PC-9 (cell line): ENCODE measurements at regions of chr17 and their contacts with region 1.

Region 1: GRCh38 chr17:40791787-40792436 is 7.8 kb downstream of the KRT28 start:
- DNase-seq: no peak
- H3K4me3 ChIP-seq: no peak overlapping the region
- H3K27ac ChIP-seq: no peak overlapping the region
- H3K4me1 ChIP-seq: no peaks in the 10 kb centered on the region
- H3K27me3 ChIP-seq: no peaks in the 10 kb centered on the region
- CTCF ChIP-seq: peak; percentile 70

Region 2: DNA sequence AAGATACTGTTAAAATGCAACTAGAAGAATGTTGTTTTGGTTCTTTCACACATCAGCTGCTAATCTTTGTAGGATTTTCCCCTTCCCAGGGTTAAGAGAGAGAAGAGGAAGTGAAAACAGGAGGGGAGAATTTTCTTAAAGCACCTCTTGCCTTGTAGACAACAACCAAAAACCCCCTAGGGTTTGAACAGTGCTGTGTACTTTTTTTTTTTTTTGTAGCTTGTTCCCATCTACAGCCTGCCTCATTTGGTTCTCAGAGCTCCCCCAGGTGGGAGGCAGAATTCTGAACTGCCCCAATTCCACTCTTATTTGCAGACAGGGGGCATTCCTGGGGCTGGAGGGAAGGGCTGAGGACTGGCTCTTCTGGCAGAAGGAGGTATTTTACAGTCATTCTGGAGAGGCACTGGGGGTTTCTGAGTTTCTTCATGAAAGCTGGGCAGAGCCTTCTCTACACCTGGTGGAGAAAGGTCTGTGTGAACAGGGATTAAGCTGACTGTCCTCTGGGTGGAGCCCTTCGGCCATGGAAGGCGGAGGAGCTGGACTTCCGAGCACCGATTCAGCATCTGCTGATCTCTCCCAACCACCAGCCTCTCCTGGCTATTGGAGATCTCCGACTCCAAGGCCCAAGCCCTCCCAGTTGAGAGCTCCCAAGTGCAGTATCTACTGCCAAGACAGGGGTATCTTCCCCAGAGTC is 176.5 kb before region 1 on chr17:
- CTCF ChIA-PET with region 1: interaction called, 14 read pairs
- POLR2A ChIA-PET with region 1: no interaction called
- intact Hi-C with region 1: loop called (anchors 1 kb)
- DNase-seq: peak; percentile 72
- H3K4me3 ChIP-seq: no peak overlapping the region
- H3K27ac ChIP-seq: no peak overlapping the region
- H3K4me1 ChIP-seq: peaks cover 10% of the 10 kb centered on the region
- H3K27me3 ChIP-seq: no peaks in the 10 kb centered on the region
- CTCF ChIP-seq: peak; percentile 73

Region 3: GRCh38 chr17:40637931-40638330 is 154.0 kb before region 1 on chr17:
- CTCF ChIA-PET with region 1: no interaction called
- POLR2A ChIA-PET with region 1: no interaction called
- intact Hi-C with region 1: loop called (anchors 5 kb)
- DNase-seq: no peak
- H3K4me3 ChIP-seq: no peak overlapping the region
- H3K27ac ChIP-seq: no peak overlapping the region
- H3K4me1 ChIP-seq: no peaks in the 10 kb centered on the region
- H3K27me3 ChIP-seq: no peaks in the 10 kb centered on the region
- CTCF ChIP-seq: no peak